ENCODE measurements at regions of chr6 and their contacts with region 1.

Region 1: DNA sequence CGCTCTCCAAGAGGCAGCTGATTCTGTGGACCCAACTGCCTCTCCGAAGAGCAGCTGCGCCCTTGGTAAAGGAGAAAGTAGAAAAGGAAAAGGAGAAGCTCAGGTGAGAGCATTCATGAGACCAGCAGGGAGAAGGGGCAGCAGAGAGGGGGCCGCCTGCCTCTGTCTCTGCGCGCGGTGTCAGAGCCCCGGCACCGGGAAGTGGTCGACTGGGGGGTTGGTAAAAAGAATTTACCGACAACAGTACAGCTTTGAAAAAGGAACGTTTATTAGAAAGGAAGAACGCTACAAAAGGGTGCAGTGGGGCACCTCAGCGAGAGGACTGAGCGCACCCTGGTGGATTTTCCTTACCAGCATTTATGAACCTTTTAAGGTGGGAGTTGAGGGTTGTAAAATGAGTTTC is 61.9 kb downstream of the GPR6 start:
- DNase-seq: peak; percentile 64 to 65
- H3K4me3 ChIP-seq: peak overlapping the region; percentile 15
- H3K4me1 ChIP-seq: no peaks in the 10 kb centered on the region; the same call in 1 of the 2 replicates
- H3K27me3 ChIP-seq: no peaks in the 10 kb centered on the region

Region 2: DNA sequence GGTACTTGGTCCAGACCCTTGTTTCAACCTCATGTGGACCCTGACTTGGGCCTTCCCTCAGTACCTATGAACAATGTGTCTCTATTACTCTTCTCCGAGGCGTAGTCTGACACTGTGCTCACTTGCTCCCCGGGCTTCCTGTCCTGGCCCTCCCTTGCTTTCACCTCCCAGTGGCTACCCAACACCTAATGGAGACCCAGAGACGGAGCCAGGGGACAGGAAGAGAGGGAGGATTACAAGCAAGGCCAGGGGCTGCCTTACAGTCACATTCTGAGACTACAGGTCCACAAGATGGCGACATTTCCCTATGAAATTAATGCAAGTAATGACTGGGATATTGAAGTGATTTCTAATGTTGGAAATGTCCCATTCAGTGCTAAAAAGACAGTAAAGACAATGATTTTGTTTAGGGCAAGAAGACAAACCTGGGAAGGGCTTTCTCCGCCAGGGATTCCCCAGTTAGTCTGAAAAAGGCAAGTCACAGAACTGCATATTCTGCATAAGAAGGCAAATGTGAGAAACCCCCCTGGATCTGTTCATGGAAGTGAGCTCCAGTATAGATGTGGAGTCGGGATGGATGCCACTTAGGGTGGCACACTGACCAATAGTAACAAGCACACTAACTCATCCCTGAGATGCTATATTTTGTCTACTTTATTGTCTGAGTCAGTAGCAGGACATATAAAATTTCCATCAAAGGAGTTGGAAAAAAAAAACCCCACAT is 512.9 kb before region 1 on chr6:
- in situ Hi-C with region 1: loop called (anchors 10 kb)
- DNase-seq: peak; percentile 72
- H3K4me3 ChIP-seq: no peak overlapping the region
- H3K4me1 ChIP-seq: no peaks in the 10 kb centered on the region
- H3K27me3 ChIP-seq: peaks cover 8% of the 10 kb centered on the region

Region 3: GRCh38 chr6:109705258-109705657 is 334.7 kb before region 1 on chr6:
- in situ Hi-C with region 1: loop called (anchors 10 kb)
- DNase-seq: peak; percentile 85 to 89
- H3K4me3 ChIP-seq: no peak overlapping the region
- H3K4me1 ChIP-seq: peaks cover 20% of the 10 kb centered on the region
- H3K27me3 ChIP-seq: no peaks in the 10 kb centered on the region